MCF 10A (cell line): ENCODE measurements at regions of chr11 and their contacts with region 1.

Region 1: DNA sequence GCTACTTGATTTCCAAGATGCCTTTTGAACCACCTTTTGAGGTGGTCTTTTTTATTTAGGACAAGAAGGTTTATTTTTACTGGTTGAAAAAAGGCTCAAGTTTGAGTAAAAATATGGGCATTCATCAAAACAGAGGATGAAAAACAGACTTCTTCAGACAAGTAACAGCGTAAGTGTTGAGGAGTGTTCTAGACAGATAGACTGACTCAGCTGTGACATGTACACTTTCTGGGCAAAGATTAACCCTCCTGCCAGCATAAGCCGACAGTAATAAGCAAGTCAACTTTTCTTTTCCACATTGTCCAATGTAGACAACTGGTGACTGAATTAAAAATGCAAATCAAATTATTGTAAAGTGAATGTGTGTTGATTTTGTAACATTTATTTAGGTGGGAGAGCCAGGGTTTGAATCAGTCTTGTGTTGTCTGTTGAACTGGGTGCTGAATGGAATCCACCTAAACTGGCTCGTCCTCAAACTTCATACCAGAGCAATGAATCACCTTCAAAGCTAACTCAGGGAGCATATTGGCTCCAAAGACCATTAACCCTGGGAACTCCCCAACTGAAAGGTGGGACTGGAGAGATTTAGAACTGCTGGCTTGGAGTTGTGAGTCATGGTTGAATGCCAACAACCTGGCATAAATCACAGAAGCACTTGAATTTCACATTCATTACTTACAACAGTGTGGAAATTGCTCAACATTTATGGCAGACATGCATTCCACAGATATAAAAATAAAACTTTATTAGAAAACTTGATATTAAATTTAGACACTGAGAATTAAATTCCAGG is 377.0 kb downstream of the ETS1 start:
- DNase-seq: peak; percentile 100
- H3K4me3 Mint-ChIP-seq: peak overlapping the region; percentile 43
- H3K27ac Mint-ChIP-seq: peak overlapping the region; percentile 86
- H3K4me1 Mint-ChIP-seq: peaks cover 34% of the 10 kb centered on the region
- H3K27me3 Mint-ChIP-seq: no peaks in the 10 kb centered on the region
- CTCF ChIP-seq: no peak

Region 2: DNA sequence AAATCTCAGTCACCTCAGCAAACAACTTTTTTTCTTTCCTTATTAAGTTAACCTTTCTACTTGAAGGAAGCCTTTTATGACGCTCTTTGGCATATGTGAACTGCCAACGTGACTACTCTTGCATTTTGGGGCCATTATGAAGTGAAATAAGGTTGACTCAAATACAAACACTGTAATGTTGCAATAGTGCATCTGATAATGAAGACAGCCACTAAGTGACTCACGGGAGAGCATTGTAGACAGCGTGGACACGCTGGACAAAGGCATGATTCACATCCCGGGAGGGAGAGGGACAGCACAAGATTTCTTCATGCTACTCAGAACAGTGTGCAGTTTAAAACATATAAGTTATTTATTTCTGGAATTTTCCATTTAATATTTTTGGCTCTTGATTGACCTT is 183.7 kb before region 1 on chr11:
- CTCF ChIA-PET with region 1: interaction called, 3 read pairs
- POLR2A ChIA-PET with region 1: no interaction called
- intact Hi-C with region 1: loop called (anchors 5 kb)
- DNase-seq: peak; percentile 98
- H3K4me3 Mint-ChIP-seq: peak overlapping the region; percentile 30
- H3K27ac Mint-ChIP-seq: peak overlapping the region; percentile 28
- H3K4me1 Mint-ChIP-seq: peaks cover 42% of the 10 kb centered on the region
- H3K27me3 Mint-ChIP-seq: no peaks in the 10 kb centered on the region
- CTCF ChIP-seq: no peak

Region 3: DNA sequence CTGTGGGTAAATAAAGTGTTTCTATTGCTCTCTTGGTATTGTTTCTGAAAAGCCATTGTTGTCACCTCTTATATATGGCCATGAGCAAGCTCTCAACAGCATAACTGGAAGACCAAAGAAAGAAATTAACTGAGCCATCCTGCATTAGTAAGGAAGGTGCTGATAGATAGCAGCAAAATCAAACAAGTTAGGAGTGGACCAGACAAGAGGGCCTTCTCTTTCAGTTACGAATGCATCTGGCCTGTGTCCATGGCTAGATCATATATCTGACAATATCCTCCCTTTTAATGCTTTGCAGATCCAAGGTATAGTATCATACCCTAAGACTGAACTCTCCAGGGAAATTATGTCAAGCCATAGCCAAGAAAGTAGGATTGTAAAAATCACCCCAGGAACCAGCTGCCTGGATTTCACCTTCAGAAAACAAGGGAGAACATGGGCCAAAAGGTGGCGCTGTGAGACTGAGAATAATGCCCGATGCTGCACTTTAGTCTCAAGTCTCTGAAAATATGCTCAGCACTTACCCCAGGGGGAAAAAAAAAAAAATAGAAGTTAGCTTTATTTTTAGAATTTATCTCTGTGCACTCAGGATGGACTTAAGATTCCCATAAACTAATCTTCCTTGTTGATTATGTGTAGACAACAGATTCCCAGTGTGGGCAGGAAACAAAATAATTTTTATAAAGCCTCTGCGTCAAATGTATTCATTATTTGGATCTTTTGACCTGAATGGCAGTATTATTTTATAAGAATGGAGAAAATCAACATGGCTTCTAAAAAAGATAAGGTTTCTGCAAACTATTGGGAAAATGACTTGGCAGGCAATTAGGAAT is 38.1 kb before region 1 on chr11:
- CTCF ChIA-PET with region 1: interaction called, 11 read pairs
- POLR2A ChIA-PET with region 1: interaction called, 10 read pairs
- intact Hi-C with region 1: loop called (anchors 2 kb)
- DNase-seq: peak; percentile 87
- H3K4me3 Mint-ChIP-seq: no peak overlapping the region
- H3K27ac Mint-ChIP-seq: peak overlapping the region; percentile 88
- H3K4me1 Mint-ChIP-seq: peaks cover 23% of the 10 kb centered on the region
- H3K27me3 Mint-ChIP-seq: no peaks in the 10 kb centered on the region
- CTCF ChIP-seq: peak; percentile 78

Region 4: DNA sequence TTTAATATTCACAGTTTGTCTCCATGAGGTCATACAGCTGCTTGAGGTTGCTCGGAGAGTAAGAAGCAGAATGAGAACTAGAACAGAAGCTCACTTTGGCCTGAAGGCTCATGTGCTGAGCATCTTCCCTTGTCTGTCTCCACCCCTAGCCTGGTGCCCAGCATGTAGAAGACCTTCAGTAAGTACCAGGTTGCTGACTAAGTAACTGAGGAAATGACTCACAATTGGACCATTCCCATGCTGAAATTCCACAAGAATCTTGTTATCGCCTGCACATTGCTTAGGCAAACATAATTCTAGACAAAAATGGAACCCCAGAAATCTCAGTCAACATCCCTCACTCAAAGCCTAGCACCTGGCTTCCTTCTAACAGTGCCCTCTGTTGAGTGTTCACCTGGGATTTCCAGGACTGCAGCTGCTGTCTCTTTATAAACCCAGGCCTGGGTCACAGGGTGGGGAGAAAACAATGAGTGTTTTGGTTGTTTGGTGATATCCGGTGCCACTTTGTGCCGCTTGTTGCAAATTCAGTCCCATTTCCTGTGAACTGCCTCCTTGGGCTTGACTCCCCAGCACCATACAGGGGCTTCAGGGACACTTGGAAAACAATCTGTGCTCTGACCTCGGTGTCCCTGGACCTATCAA is 29.8 kb before region 1 on chr11:
- CTCF ChIA-PET with region 1: interaction called, 3 read pairs
- POLR2A ChIA-PET with region 1: interaction called, 10 read pairs
- intact Hi-C with region 1: loop called (anchors 1 kb)
- DNase-seq: peak; percentile 82
- H3K4me3 Mint-ChIP-seq: no peak overlapping the region
- H3K27ac Mint-ChIP-seq: peak overlapping the region; percentile 36
- H3K4me1 Mint-ChIP-seq: peaks cover 34% of the 10 kb centered on the region
- H3K27me3 Mint-ChIP-seq: no peaks in the 10 kb centered on the region
- CTCF ChIP-seq: no peak

Region 5: DNA sequence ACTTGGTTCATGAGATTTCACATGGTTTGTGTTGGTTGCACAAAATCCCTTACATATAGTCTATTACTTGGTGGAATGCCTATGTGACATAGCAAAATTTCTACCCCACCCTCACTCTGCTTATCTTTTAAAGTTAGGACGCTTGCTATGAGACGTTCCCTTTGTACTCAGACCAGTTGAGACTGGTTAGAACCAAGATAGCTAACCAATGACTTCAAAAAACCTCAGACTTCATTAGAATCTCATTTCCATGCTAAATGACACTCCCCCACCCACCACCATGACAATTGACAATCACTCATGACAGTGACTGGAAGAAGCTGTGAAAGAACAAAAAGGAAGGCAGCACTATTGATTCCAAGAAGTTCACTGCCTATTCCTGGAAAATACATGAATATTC is 63.4 kb after region 1 on chr11:
- CTCF ChIA-PET with region 1: no interaction called
- POLR2A ChIA-PET with region 1: no interaction called
- intact Hi-C with region 1: no loop called
- DNase-seq: no peak
- H3K4me3 Mint-ChIP-seq: no peak overlapping the region
- H3K27ac Mint-ChIP-seq: no peak overlapping the region
- H3K4me1 Mint-ChIP-seq: peaks cover 7% of the 10 kb centered on the region
- H3K27me3 Mint-ChIP-seq: no peaks in the 10 kb centered on the region
- CTCF ChIP-seq: no peak

Region 6: GRCh38 chr11:128290106-128290840 is 79.9 kb after region 1 on chr11:
- CTCF ChIA-PET with region 1: interaction called, 3 read pairs
- POLR2A ChIA-PET with region 1: no interaction called
- intact Hi-C with region 1: loop called (anchors 1 kb)
- DNase-seq: peak; percentile 72
- H3K4me3 Mint-ChIP-seq: no peak overlapping the region
- H3K27ac Mint-ChIP-seq: no peak overlapping the region
- H3K4me1 Mint-ChIP-seq: peaks cover 15% of the 10 kb centered on the region
- H3K27me3 Mint-ChIP-seq: no peaks in the 10 kb centered on the region
- CTCF ChIP-seq: peak; percentile 76

Region 7: DNA sequence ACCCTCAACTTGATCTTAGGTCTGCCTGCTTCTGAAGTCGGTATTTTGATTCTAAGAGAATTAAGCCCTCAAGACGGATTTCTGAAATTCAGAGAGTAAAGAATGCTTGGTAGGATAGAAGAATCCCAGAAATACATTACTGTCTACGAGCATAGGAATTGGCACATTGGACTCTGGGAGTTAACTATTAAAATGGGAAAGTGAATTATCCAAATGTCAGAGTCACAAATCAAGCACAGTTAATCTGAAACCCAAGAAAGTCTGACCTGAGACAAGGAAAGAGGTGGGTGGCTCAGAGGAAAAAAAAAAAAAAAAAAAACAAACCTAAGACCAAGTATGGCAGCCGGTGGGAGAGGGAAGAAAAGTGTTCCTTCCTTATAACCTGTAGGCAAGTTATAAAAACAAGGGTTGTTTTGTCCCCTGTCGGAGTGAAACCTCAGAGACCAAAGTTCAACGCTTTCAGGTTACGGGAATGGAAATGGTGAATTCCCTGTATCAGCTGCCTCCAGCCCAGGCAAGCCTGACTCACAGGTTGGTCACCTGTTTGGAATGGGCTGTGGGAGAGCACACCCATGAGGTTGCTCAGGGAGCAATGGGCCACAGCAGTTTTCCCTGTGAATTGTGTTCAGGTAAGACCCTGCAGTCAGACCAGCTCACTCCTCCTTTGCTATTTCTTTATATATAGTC is 238.0 kb after region 1 on chr11:
- CTCF ChIA-PET with region 1: no interaction called
- POLR2A ChIA-PET with region 1: no interaction called
- intact Hi-C with region 1: loop called (anchors 10 kb)
- DNase-seq: peak; percentile 87
- H3K4me3 Mint-ChIP-seq: peak overlapping the region; percentile 61
- H3K27ac Mint-ChIP-seq: peak overlapping the region; percentile 88
- H3K4me1 Mint-ChIP-seq: peaks cover 22% of the 10 kb centered on the region
- H3K27me3 Mint-ChIP-seq: no peaks in the 10 kb centered on the region
- CTCF ChIP-seq: peak; percentile 10

Region 8: DNA sequence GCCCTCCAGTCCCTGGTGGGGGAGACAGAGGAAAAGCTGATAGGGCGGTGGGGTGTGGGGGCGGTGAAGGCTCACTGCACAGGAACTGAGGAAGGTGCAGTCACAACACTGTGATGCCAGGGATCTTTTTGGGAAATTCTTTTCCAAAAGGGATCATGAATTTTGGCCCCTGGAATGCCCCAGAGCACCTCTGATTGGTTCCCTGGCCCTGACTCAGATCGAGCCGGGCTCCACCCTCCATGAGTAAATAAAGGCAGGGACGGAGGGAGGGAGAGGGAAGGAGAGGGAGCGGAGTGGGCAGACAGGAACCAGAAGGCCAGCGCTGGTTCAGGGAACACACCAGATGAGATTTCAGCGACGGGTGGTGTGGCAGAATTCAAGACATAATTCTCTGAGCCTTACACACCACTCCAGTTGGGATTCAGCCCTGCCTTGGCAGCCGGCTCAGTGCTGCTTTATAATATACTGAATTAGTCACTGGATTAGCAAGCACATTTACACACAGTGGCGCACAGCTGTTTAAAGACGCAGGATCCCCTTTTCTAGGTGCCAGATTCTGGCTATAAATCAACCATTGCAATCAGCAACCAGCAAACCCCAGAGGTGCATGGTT is 296.8 kb after region 1 on chr11:
- CTCF ChIA-PET with region 1: interaction called, 3 read pairs
- POLR2A ChIA-PET with region 1: interaction called, 3 read pairs
- intact Hi-C with region 1: loop called (anchors 5 kb)
- DNase-seq: peak; percentile 88
- H3K4me3 Mint-ChIP-seq: peak overlapping the region; percentile 64
- H3K27ac Mint-ChIP-seq: peak overlapping the region; percentile 89
- H3K4me1 Mint-ChIP-seq: peaks cover 69% of the 10 kb centered on the region
- H3K27me3 Mint-ChIP-seq: no peaks in the 10 kb centered on the region
- CTCF ChIP-seq: no peak